Sigmoid colon (tissue), 7 donors: ENCODE measurements at regions of chr11 and their contacts with region 1.

Region 1: DNA sequence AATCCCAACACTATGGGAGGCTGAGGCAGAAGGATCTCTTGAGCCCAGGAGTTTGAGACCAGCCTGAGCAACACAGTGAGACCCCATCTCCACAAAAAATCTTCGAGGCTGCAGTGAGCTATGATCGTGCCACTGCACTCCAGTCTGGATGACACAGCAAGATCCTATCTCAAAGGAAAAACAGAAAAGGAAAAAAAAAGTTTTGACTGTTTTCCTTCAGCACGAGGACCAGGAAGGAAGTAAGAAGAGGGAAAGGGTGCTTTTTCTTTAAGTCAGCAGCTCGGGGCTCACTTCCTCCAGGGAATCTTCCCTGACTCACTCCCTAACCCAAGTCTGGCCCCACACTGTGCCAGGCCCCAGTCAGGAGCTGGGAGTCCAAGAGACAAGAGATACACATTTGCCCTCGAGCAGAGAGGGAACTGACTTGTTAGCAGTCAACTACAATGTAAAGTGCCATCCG is 14.2 kb downstream of the ARRB1 start:
- DNase-seq: peak; percentile 82
- H3K4me3 ChIP-seq: no peak overlapping the region
- H3K27ac ChIP-seq: peak overlapping the region; percentile 97 to 98 (median 97)
- H3K4me1 ChIP-seq: peaks cover 3 to 99% (median 95%) of the 10 kb centered on the region in 4 donors
- H3K27me3 ChIP-seq: no peaks in the 10 kb centered on the region
- CTCF ChIP-seq: no peak
- EP300 ChIP-seq: no peak
- POLR2A ChIP-seq: no peak

Region 2: DNA sequence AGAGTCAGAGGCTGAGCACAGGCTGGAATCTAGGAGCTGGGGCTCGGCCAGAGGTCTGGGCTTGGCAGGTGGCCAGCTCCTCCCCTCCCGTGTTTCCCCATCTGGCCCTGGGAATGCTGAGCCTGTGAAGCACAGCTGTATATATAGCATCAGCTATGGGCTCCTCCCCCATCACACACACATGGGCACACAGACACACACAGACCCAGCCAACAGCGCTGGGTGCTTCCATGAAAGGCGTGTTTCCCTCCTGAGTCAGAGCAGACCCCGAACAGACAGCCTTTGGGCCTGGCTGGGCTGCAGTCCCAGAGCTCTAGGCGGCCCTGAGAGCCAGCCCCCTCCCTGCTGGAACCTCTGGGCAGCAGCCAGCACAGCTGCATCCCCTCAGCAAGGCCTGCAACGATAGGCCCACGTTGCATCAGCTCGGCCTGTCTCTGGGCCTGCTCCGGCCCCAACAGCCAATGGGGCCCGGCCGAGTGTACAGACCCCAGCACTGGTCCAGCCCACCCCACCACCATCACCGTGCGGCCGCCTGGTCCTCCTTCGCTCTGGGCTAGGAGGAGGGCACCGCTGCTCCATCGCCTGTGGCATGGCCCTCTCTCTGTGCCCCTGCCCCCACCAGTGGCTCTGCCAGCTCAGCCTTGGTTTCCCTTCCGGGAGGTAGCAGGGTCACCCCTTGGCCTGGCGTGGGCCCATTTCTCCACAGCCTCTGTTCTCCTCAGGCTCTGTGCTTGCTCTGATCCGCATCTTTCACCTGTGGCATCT is 217.2 kb after region 1 on chr11:
- intact Hi-C with region 1: loop called (anchors 5 kb)
- DNase-seq: peak; percentile 99
- H3K4me3 ChIP-seq: peak overlapping the region in 2 of 4 donors; percentile 16 to 26
- H3K27ac ChIP-seq: peak overlapping the region; percentile 92 to 100 (median 99)
- H3K4me1 ChIP-seq: peaks cover 0 to 55% (median 52%) of the 10 kb centered on the region in 4 donors
- H3K27me3 ChIP-seq: no peaks in the 10 kb centered on the region
- CTCF ChIP-seq: no peak
- EP300 ChIP-seq: peak in 2 of 4 donors; percentile 80 to 86
- POLR2A ChIP-seq: peak in 1 of 2 donors; percentile 50